ENCODE measurements at regions of chr9 and their contacts with region 1.

Region 1: GRCh38 chr9:111068771-111069170 is 30.5 kb upstream of the LPAR1 start:
- ATAC-seq: peak in 2 of 8 experiments; percentile 31 to 56
- H3K4me3 ChIP-seq: no peak overlapping the region
- H3K27ac ChIP-seq: no peak overlapping the region
- H3K4me1 ChIP-seq: peaks cover 0 to 2% of the 10 kb centered on the region in 2 donors

Region 2: DNA sequence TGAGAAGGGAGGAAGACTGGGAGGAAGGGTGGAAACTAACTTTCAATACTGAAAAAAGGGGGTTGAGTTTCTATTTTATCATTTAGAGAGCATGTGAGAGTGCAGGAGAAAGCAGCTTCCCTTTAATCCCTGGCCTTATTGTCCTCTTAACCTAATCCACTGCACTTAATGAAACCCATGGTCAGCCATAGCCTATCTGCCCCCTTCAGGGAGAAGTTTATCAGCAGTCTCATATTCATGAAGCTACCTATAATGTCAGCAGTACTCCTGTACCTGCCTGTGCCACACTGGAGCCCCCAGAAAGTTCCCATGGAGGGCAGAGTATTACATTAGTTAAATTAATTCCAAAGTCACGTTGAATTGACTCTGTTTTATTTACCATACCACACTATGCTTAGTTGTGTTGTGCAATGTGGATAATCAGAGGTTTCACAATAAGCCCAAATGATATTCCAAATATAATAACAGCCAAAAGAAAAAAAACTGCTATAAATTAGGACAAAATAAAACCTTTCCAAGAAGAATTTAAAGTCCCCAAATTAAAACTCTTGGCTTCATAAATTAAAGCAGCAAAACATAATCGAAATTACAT is 337.2 kb before region 1 on chr9:
- in situ Hi-C with region 1: no loop called
- ATAC-seq: no peak
- H3K4me3 ChIP-seq: no peak overlapping the region
- H3K27ac ChIP-seq: no peak overlapping the region
- H3K4me1 ChIP-seq: no peaks in the 10 kb centered on the region

Region 3: DNA sequence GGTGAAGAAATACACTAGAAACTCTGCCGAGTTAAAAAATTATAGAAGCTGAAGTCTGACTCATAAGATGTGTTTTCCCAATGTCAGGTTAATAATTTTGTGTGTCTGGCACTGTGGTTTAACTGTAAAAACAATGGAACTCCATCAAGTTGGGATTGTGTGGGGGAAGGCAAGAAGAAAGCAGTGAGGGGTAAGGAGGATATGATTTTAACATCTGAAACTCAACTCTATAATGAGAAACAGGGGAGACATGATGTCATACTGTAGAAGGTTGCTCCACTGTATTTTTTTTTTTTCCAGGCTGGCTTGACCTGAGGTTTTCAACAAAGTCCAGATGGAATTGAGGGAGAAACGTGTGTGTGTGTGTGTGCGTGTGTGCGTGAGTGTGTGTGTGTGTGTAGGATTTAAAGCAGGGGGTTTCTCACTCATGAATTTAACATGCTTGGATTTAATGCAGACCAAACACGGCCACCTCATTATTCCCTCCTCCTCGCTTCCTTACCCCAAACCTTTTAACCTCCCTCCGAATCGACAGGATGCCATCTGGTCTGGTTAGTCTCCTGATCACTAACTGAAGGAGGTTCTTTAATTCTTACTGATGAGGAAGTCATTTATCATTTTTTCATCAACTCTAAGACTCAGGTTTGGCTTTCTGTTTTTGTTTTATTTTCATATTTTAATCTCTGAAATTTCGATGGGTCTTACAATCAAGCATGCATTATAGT is 109.7 kb after region 1 on chr9:
- in situ Hi-C with region 1: loop called in 1 of 9 experiments (anchors 25 kb)
- ATAC-seq: peak in 3 of 8 experiments; percentile 18 to 45 (median 36)
- H3K4me3 ChIP-seq: no peak overlapping the region
- H3K27ac ChIP-seq: no peak overlapping the region
- H3K4me1 ChIP-seq: peaks cover 0 to 4% of the 10 kb centered on the region in 2 donors

Measured in motor neuron (in vitro differentiated cells).